SK-N-SH (cell line): ENCODE measurements at regions of chr4 and their contacts with region 1.

Region 1: GRCh38 chr4:8468746-8469535 is 28.4 kb downstream of the TRMT44 start:
- DNase-seq: peak; percentile 89
- H3K4me3 ChIP-seq: peak overlapping the region in 1 of 2 experiments; percentile 41; a peak in 1 of 4 replicates
- H3K27ac ChIP-seq: no peak overlapping the region
- H3K4me1 ChIP-seq: no peaks in the 10 kb centered on the region
- H3K27me3 ChIP-seq: no peaks in the 10 kb centered on the region
- CTCF ChIP-seq: peak; percentile 93
- EP300 ChIP-seq: no peak
- RAD21 ChIP-seq: peak; percentile 83

Region 2: GRCh38 chr4:8457646-8458252 is 11.2 kb before region 1 on chr4:
- CTCF ChIA-PET with region 1: interaction called, 10 read pairs
- POLR2A ChIA-PET with region 1: no interaction called
- DNase-seq: no peak
- H3K4me3 ChIP-seq: no peak overlapping the region
- H3K27ac ChIP-seq: no peak overlapping the region
- H3K4me1 ChIP-seq: no peaks in the 10 kb centered on the region
- H3K27me3 ChIP-seq: no peaks in the 10 kb centered on the region
- CTCF ChIP-seq: no peak
- EP300 ChIP-seq: no peak
- RAD21 ChIP-seq: no peak

Region 3: DNA sequence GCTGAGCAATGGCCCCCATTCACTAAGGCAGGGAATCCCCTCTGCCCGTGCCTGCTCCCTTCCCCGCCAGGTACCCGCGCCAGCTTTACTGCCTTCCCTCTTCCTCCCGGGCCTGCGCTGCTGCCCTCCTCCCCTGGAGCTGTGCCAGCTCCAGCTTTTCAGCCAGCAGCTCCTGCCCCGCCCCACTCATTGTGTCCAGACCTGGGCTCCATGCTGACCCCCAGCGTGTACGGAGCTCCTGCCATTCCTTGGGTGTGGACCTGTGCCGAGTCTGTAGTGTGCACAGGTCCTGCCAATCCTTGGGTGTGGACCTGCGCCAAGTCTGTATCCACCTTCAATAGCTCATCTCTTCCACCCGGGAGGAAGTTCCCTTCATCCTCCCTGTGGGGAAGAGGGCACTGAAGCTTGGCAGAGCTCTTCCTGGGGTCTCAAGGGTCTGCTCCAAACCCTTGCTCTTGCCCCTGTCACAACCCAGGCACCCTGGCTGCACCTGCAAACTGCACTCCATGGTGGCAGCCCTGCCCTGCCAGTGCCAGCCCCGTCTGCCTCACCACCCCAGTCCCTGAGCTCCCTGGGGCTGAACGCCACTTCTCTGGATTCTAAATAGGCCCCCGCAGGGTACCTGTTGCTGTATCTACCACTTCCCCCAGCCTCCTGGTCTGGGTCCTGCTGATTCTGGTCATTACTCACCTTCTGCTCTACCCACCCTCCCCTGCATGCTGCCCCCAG is 35.5 kb after region 1 on chr4:
- CTCF ChIA-PET with region 1: interaction called, 27 read pairs
- POLR2A ChIA-PET with region 1: no interaction called
- DNase-seq: peak; percentile 79
- H3K4me3 ChIP-seq: no peak overlapping the region
- H3K27ac ChIP-seq: no peak overlapping the region
- H3K4me1 ChIP-seq: peaks cover 0 to 9% of the 10 kb centered on the region in 2 experiments; a peak in 1 of 4 replicates
- H3K27me3 ChIP-seq: peaks cover 10% of the 10 kb centered on the region; the same call in 1 of the 2 replicates
- CTCF ChIP-seq: no peak
- EP300 ChIP-seq: no peak
- RAD21 ChIP-seq: no peak

Region 4: DNA sequence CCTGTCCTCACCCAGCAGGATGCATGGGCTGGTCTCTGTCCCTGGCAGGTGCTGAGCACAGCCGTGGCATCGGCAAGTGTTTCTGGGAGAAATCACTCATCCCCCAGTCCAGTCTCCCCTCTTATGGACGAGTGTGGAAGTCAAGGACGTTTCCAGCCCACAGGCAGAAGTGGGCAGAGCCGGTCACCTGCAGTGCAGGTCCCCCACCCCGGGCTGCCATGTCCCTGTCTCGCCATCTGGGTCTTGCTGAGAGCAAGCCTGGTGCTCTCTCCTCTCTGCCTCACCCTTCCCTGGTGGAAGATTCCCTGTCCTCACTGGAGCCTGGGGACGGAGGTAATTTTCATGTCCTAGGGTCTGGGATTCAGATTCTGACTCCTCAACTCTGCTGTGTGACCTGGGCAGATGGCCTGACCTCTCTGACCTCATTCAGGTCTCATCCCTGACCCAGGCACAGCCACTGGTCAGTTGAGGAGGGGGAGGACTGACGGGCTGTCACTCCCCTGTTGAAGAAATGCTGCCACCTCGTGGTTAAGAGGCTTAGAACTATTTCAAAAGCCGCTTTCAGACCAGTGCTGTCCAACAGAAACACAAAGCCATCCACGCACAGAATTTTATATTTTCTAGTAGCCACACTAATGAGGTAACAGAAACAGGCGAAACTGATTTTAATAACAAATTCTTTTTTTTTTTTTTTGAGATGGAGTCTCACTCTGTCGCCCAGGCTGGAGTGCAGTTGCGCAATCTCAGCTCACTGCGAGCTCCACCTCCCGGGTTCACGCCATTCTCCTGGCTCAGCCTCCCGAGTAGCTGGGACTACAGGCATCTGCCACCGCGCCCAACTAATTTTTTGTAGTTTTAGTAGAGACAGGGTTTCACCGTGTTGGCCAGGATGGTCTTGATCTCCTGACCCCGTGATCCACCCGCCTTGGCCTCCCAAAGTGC is 125.4 kb after region 1 on chr4:
- CTCF ChIA-PET with region 1: interaction called, 54 read pairs
- POLR2A ChIA-PET with region 1: no interaction called
- DNase-seq: peak; percentile 93
- H3K4me3 ChIP-seq: no peak overlapping the region
- H3K27ac ChIP-seq: no peak overlapping the region
- H3K4me1 ChIP-seq: peaks cover 0 to 38% of the 10 kb centered on the region in 2 experiments; a peak in 1 of 4 replicates
- H3K27me3 ChIP-seq: no peaks in the 10 kb centered on the region
- CTCF ChIP-seq: peak; percentile 80
- EP300 ChIP-seq: no peak
- RAD21 ChIP-seq: peak; percentile 82

Region 5: GRCh38 chr4:8607603-8608481 is 138.9 kb after region 1 on chr4:
- CTCF ChIA-PET with region 1: interaction called, 16 read pairs
- POLR2A ChIA-PET with region 1: no interaction called
- DNase-seq: peak; percentile 97
- H3K4me3 ChIP-seq: peak overlapping the region in 1 of 2 experiments; percentile 48; a peak in 1 of 4 replicates
- H3K27ac ChIP-seq: no peak overlapping the region
- H3K4me1 ChIP-seq: peaks cover 0 to 10% of the 10 kb centered on the region in 2 experiments; a peak in 1 of 4 replicates
- H3K27me3 ChIP-seq: no peaks in the 10 kb centered on the region
- CTCF ChIP-seq: peak; percentile 87
- EP300 ChIP-seq: no peak
- RAD21 ChIP-seq: peak; percentile 84